CD8-positive, alpha-beta T cell (primary cell): ENCODE measurements at regions of chr11 and their contacts with region 1.

Region 1: DNA sequence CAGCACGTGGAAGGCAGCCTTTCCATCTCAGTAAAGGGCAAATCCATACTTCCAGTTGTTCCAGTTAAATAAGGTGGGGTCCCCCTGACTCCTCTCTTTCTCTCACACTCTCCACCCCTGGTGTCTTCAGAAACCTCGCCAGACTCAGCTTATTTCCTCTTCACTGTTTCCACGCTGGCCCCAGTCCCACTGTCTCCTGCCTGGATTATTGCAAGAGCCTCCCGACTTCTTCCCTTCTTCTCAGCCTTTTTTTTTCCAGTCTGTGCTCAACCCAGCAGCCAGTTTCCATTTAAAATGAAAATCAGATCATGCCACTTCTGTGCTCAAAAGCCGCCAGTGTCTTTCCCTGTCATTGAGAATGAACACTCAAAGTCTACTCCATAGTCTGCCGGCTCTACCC is 131.4 kb downstream of the PKNOX2 start:
- DNase-seq: no peak
- ATAC-seq: no peak
- H3K4me3 ChIP-seq: no peak overlapping the region
- H3K4me3 Mint-ChIP-seq: no peak overlapping the region
- H3K27ac ChIP-seq: no peak overlapping the region
- H3K27ac Mint-ChIP-seq: no peak overlapping the region
- H3K4me1 ChIP-seq: no peaks in the 10 kb centered on the region
- H3K4me1 Mint-ChIP-seq: no peaks in the 10 kb centered on the region
- H3K27me3 ChIP-seq: no peaks in the 10 kb centered on the region
- H3K27me3 Mint-ChIP-seq: peaks cover 23% of the 10 kb centered on the region
- CTCF ChIP-seq: no peak

Region 2: DNA sequence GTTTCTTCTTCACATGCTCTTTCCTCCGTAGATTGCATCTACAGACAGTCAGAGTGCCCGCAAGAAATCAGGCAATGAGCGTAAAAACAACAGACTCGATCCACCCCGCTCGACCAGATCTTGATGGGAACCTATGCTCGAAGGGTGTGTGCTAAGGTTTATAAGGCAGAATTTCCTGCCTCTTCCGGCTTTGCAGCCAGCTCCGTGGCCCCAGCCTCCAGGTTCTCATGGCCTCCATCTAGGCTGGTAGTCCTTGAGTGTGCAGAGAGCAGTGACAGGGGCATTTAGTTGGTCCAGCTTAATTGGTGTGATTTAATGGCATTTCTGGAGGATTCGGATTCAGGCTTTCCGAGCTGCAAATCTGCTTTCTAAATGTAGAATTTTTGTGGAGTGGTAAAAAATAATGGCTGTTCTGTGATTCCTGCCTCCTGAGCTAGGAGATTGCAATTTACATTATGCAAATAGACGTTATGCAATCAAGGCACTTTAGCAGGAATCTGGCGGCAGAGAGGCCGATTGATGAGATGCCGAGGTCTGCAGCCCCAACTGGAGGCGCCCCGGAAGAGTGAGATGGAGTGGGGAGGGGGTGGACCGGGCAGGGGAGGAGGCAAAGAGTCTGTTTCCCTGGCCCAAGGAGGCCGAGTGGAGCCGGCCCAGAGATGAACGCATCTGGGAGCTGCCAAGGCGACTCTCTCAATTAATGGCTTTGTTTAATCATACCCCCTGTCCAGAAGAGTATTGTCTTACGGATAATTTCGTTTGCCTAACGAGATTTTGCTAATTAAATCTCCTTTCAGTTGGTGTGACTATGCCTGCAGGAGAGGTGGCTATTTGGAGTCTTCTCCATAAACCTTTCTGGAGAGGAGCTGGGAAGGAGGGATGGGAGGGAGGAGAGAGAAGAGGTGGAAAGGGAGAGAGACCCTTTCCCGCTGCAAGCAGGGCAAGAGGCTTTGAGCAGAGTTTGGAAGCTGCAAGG is 56.1 kb before region 1 on chr11:
- CTCF ChIA-PET with region 1: no interaction called
- POLR2A ChIA-PET with region 1: no interaction called
- intact Hi-C with region 1: loop called in 1 of 2 experiments (anchors 10 kb)
- DNase-seq: no peak
- ATAC-seq: no peak
- H3K4me3 ChIP-seq: no peak overlapping the region
- H3K4me3 Mint-ChIP-seq: no peak overlapping the region
- H3K27ac ChIP-seq: no peak overlapping the region
- H3K27ac Mint-ChIP-seq: no peak overlapping the region
- H3K4me1 ChIP-seq: no peaks in the 10 kb centered on the region
- H3K4me1 Mint-ChIP-seq: no peaks in the 10 kb centered on the region
- H3K27me3 ChIP-seq: no peaks in the 10 kb centered on the region
- H3K27me3 Mint-ChIP-seq: peaks cover 28% of the 10 kb centered on the region
- CTCF ChIP-seq: no peak

Region 3: DNA sequence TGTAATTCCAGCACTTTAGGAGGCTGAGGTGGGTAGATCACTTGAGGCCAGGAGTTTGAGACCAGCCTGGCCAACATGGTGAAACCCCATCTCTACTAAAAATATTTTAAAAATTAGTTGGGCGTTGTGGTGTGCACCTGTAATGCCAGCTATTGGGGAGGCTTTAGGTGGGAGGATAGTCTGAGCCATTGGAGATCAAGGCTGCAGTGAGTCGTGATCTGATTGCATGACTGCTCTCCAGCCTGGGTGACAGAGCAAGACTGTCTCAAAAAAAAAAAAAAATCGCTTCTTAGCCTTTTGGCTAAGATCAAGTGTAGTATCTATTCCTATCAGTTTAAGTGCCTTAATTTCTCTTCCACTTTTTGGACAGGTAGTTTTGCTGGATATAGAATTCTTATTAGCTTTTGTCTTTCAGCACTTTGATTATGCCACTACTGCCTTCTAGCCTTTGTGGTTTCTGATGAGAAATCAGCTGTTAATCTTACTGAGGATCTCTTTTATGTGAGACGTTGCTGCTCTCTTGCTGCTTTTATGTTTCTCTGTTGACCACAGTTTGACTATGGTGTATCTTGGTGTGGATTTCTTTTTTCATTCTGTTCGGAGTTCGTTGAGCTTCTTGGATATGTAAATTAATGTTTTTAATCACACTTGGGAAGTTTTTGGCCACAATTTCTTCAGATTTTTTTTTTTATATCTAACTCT is 353.7 kb after region 1 on chr11:
- CTCF ChIA-PET with region 1: no interaction called
- POLR2A ChIA-PET with region 1: no interaction called
- intact Hi-C with region 1: no loop called
- DNase-seq: peak in 2 of 9 experiments; percentile 3 to 12
- ATAC-seq: no peak
- H3K4me3 ChIP-seq: no peak overlapping the region
- H3K4me3 Mint-ChIP-seq: no peak overlapping the region
- H3K27ac ChIP-seq: no peak overlapping the region
- H3K27ac Mint-ChIP-seq: no peak overlapping the region
- H3K4me1 ChIP-seq: no peaks in the 10 kb centered on the region
- H3K4me1 Mint-ChIP-seq: peaks cover 5% of the 10 kb centered on the region
- H3K27me3 ChIP-seq: no peaks in the 10 kb centered on the region
- H3K27me3 Mint-ChIP-seq: no peaks in the 10 kb centered on the region
- CTCF ChIP-seq: no peak